SK-N-SH (cell line): ENCODE measurements at regions of chr18 and their contacts with region 1.

Region 1: GRCh38 chr18:54983041-54983686 is 23.9 kb upstream of the CCDC68 start:
- DNase-seq: peak; percentile 67
- H3K4me3 ChIP-seq: no peak overlapping the region; a peak in 1 of 4 replicates
- H3K27ac ChIP-seq: peak overlapping the region in 1 of 2 experiments; percentile 28; a peak in 1 of 4 replicates
- H3K4me1 ChIP-seq: peaks cover 0 to 14% of the 10 kb centered on the region in 2 experiments; a peak in 2 of 4 replicates
- H3K27me3 ChIP-seq: no peaks in the 10 kb centered on the region
- CTCF ChIP-seq: peak; percentile 80
- EP300 ChIP-seq: peak; percentile 42 to 86; a peak in 3 of 4 replicates
- RAD21 ChIP-seq: peak; percentile 95

Region 2: DNA sequence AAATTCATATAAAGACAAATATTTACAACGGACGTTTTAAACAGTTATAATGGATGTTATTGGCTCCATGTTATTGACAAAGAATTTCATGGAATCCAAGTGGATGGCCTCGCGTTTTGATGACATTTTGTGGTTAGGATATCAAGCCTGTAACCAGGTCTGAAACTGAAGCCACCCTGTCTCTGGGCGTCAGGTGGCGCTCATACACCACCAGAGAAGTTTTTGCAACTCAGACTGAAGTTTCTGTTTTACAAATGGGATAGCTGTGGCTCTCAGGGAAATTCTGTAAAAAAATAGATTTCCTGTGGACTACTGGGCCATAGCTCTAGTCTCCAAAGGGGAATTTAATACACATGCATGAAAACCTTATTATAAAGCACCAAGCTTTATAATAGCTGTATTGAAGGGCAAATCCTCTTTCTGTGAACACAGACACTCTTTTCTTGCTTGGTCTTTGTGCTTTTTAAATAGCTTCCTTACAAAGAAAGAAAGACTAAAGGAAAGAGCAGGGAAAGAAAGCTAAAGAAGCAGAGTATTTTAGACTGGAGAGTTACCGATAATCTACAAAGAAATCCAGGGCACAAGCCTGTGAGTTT is 538.7 kb before region 1 on chr18:
- CTCF ChIA-PET with region 1: interaction called, 12 read pairs
- POLR2A ChIA-PET with region 1: no interaction called
- DNase-seq: peak; percentile 39
- H3K4me3 ChIP-seq: no peak overlapping the region; a peak in 1 of 4 replicates
- H3K27ac ChIP-seq: no peak overlapping the region
- H3K4me1 ChIP-seq: no peaks in the 10 kb centered on the region
- H3K27me3 ChIP-seq: no peaks in the 10 kb centered on the region
- CTCF ChIP-seq: peak; percentile 78
- EP300 ChIP-seq: no peak
- RAD21 ChIP-seq: peak; percentile 90

Region 3: GRCh38 chr18:54679318-54680149 is 303.6 kb before region 1 on chr18:
- CTCF ChIA-PET with region 1: interaction called, 37 read pairs
- POLR2A ChIA-PET with region 1: no interaction called
- DNase-seq: peak; percentile 67
- H3K4me3 ChIP-seq: no peak overlapping the region
- H3K27ac ChIP-seq: peak overlapping the region in 1 of 2 experiments; percentile 50; a peak in 2 of 4 replicates
- H3K4me1 ChIP-seq: peaks cover 4 to 6% of the 10 kb centered on the region in 2 experiments; a peak in 2 of 4 replicates
- H3K27me3 ChIP-seq: no peaks in the 10 kb centered on the region
- CTCF ChIP-seq: peak; percentile 79
- EP300 ChIP-seq: no peak; a peak in 1 of 4 replicates
- RAD21 ChIP-seq: peak; percentile 99

Region 4: DNA sequence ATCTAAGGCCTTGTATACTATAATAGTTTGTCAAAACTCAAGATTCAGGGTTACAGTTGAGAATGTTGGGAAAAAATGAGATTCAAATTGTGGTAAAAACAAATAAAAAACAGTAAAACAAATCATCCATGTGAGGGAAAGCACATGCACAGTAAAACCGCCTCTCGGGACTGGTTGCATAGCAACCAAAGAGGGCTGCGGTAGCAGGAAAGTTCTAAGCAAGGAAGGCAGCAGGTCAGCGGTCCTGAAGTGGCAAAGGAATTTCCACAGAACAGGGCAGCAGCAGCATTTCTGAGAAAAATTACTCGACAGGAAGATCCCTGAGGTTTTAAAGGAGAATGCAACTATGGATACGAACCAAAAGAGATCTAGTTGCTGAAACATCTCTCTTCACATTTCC is 298.4 kb before region 1 on chr18:
- CTCF ChIA-PET with region 1: interaction called, 37 read pairs
- POLR2A ChIA-PET with region 1: no interaction called
- DNase-seq: peak; percentile 8
- H3K4me3 ChIP-seq: no peak overlapping the region
- H3K27ac ChIP-seq: no peak overlapping the region
- H3K4me1 ChIP-seq: peaks cover 4% of the 10 kb centered on the region in 2 experiments; a peak in 2 of 4 replicates
- H3K27me3 ChIP-seq: no peaks in the 10 kb centered on the region
- CTCF ChIP-seq: no peak
- EP300 ChIP-seq: no peak
- RAD21 ChIP-seq: no peak

Region 5: GRCh38 chr18:54950221-54950620 is 32.9 kb before region 1 on chr18:
- CTCF ChIA-PET with region 1: interaction called, 16 read pairs
- POLR2A ChIA-PET with region 1: no interaction called
- DNase-seq: no peak
- H3K4me3 ChIP-seq: no peak overlapping the region
- H3K27ac ChIP-seq: no peak overlapping the region
- H3K4me1 ChIP-seq: peaks cover 0 to 10% of the 10 kb centered on the region in 2 experiments; a peak in 1 of 4 replicates
- H3K27me3 ChIP-seq: no peaks in the 10 kb centered on the region
- CTCF ChIP-seq: peak; percentile 39
- EP300 ChIP-seq: no peak
- RAD21 ChIP-seq: peak; percentile 70